HEK293 (cell line): ENCODE measurements at regions of chr2 and their contacts with region 1.

Region 1: GRCh38 chr2:169109502-169110409 is 40.4 kb downstream of the DHRS9 start:
- H3K4me3 ChIP-seq: no peak overlapping the region
- H3K27ac ChIP-seq: no peak overlapping the region
- H3K4me1 ChIP-seq: no peaks in the 10 kb centered on the region
- CTCF ChIP-seq: peak; percentile 80

Region 2: GRCh38 chr2:168961450-168962229 is 148.1 kb before region 1 on chr2:
- CTCF ChIA-PET with region 1: interaction called, 32 read pairs
- POLR2A ChIA-PET with region 1: no interaction called
- H3K4me3 ChIP-seq: no peak overlapping the region
- H3K27ac ChIP-seq: no peak overlapping the region
- H3K4me1 ChIP-seq: no peaks in the 10 kb centered on the region
- CTCF ChIP-seq: peak; percentile 35; the same call in 1 of the 2 replicates

Region 3: DNA sequence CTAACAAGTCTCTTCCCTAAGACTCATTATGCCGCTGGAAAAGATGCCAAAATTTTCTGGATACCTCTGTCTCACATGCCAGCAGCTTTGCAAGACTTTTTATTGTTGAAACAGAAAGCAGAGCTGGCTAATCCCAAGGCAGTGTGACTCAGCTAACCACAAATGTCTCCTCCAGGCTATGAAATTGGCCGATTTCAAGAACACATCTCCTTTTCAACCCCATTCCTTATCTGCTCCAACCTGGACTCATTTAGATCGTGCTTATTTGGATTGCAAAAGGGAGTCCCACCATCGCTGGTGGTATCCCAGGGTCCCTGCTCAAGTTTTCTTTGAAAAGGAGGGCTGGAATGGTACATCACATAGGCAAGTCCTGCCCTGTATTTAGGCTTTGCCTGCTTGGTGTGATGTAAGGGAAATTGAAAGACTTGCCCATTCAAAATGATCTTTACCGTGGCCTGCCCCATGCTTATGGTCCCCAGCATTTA is 14.1 kb before region 1 on chr2:
- CTCF ChIA-PET with region 1: interaction called, 13 read pairs
- POLR2A ChIA-PET with region 1: no interaction called
- H3K4me3 ChIP-seq: no peak overlapping the region
- H3K27ac ChIP-seq: no peak overlapping the region
- H3K4me1 ChIP-seq: 0 out of 2 replicates have a peak, but pooled peaks cover 3% of the 10 kb centered on the region
- CTCF ChIP-seq: no peak

Region 4: DNA sequence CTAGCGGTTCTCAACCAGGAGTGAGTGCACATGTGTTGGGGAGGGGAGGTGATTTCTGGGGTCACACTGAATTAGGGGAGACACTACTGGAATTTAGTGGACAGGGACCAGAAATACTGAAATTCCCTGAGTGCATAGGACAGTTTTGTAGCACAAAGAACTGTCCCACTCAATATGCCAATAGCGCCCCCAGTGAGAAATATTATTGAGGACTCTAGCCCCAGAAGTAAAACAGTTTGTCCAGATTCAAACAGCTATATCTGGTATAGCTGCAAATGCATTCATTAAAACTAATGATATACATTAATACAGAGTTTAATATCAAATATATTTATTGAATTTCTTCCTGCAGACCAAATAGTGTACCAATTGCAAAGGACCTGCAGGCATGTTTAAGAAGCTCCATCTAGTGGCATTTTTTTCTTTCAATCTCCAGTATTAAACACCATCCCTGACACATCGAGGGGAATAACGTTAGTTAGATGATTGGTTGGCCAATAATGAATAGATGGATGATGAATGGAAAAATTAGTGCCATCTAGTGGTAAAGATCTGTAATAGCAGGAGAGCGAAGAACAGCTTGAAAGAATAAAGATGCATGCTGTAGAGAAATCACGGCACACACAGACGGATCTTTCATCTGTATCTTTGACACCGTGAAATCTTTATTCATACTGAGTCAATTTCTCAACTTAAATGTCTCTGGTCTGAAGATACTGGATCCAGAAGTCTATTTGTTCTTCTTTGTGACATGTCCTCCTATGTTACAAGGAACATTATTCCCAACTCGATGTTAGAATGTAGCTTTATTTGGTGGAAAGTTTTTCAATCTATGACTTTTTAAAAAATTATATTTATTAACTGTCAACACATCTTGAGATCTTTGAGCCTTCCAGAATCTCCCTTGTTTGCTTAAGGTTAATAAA is 22.1 kb after region 1 on chr2:
- CTCF ChIA-PET with region 1: interaction called, 36 read pairs
- POLR2A ChIA-PET with region 1: no interaction called
- H3K4me3 ChIP-seq: no peak overlapping the region
- H3K27ac ChIP-seq: no peak overlapping the region
- H3K4me1 ChIP-seq: no peaks in the 10 kb centered on the region
- CTCF ChIP-seq: peak; percentile 32; the same call in 1 of the 2 replicates

Region 5: DNA sequence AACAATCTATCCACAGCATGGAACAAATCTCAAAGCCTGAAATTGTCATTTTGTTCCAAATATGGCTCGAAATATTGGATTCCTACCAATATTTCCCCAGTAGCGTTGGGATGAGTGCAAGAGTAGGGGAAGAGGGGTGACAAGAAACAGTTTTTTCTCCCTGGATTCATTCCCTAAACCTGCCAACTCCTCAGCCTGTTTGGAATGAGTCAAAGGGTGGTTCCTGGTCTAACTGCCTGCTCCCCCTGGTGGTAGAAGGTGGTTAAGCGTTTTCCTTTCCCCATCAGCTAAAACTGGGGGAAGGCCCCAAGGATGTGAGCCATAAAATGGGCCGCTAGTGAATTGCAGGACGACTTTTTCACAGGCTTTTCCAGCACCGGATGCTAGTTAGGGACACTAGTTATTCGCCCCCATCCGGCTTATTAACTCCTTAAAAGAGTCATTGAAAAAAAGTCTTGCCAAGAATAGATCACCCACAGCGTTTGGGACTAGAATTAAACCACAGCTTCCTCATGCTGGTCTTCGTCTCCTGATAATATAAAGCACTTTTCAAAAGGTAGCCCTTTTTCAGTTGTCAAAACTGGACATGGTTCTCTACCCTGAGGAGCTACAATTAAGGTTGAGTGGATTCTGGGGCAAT is 32.1 kb after region 1 on chr2:
- CTCF ChIA-PET with region 1: interaction called, 34 read pairs
- POLR2A ChIA-PET with region 1: no interaction called
- H3K4me3 ChIP-seq: no peak overlapping the region
- H3K27ac ChIP-seq: no peak overlapping the region
- H3K4me1 ChIP-seq: no peaks in the 10 kb centered on the region
- CTCF ChIP-seq: peak; percentile 53

Region 6: GRCh38 chr2:169221745-169222369 is 112.1 kb after region 1 on chr2:
- CTCF ChIA-PET with region 1: interaction called, 43 read pairs
- POLR2A ChIA-PET with region 1: no interaction called
- H3K4me3 ChIP-seq: no peak overlapping the region
- H3K27ac ChIP-seq: no peak overlapping the region
- H3K4me1 ChIP-seq: no peaks in the 10 kb centered on the region
- CTCF ChIP-seq: peak; percentile 26; the same call in 1 of the 2 replicates

Region 7: DNA sequence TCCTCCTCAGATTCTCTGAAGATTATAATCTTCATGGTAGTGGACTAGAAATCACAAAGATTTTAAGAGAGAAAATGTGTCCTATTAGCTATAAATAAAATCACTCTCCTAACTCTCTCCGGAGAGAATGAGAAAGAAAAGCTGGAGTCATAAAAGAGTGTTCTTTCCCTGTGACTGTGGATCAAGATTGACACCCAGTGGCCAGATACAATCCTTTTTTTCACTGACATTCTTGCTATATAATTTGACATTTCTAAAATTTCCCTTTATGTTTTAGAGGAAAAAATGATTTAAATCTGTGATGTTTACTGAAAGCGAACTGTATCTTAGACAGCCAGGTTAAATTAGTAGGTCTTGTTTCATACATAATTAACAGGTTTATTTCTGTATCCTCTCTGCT is 287.9 kb after region 1 on chr2:
- CTCF ChIA-PET with region 1: interaction called, 67 read pairs
- POLR2A ChIA-PET with region 1: no interaction called
- H3K4me3 ChIP-seq: no peak overlapping the region
- H3K27ac ChIP-seq: no peak overlapping the region
- H3K4me1 ChIP-seq: no peaks in the 10 kb centered on the region; the same call in 1 of the 2 replicates
- CTCF ChIP-seq: peak; percentile 39; the same call in 1 of the 2 replicates